Calu3 (cell line): ENCODE measurements at regions of chr7 and their contacts with region 1.

Region 1: GRCh38 chr7:82257118-82257695 is 186.4 kb downstream of the CACNA2D1 start:
- DNase-seq: no peak
- H3K4me3 Mint-ChIP-seq: no peak overlapping the region
- H3K27ac Mint-ChIP-seq: no peak overlapping the region
- H3K4me1 Mint-ChIP-seq: peaks cover 17% of the 10 kb centered on the region
- H3K27me3 Mint-ChIP-seq: no peaks in the 10 kb centered on the region
- CTCF ChIP-seq: no peak

Region 2: DNA sequence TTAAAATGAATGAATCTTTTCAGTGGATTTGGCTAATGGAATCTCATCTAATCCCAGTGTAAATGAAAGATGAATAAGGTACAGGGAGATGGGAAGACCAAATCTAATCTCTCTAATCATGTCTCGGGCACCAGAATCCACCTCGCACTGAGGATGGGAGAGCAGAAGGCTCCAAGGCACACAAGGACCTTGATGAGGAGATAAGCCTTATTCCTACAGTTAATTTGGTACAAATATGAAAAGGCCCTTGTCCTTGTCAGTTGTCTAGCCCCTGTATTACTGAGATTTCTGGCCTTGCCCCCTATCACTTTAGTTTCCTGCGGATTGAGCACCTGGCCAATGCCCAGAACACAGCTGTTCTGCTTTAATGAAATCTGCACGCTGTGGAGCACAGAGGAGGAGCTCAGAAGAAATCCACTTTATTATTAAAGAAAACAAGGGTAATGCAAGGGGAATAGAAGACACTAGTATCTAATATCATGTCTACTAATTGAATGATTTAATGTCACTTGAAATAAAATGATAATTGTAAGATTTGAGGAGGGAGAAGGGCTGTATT is 166.0 kb before region 1 on chr7:
- CTCF ChIA-PET with region 1: no interaction called
- intact Hi-C with region 1: no loop called
- DNase-seq: no peak
- H3K4me3 Mint-ChIP-seq: no peak overlapping the region
- H3K27ac Mint-ChIP-seq: no peak overlapping the region
- H3K4me1 Mint-ChIP-seq: no peaks in the 10 kb centered on the region
- H3K27me3 Mint-ChIP-seq: no peaks in the 10 kb centered on the region
- CTCF ChIP-seq: no peak

Region 3: GRCh38 chr7:82156168-82156567 is 101.0 kb before region 1 on chr7:
- CTCF ChIA-PET with region 1: no interaction called
- intact Hi-C with region 1: no loop called
- DNase-seq: no peak
- H3K4me3 Mint-ChIP-seq: no peak overlapping the region
- H3K27ac Mint-ChIP-seq: no peak overlapping the region
- H3K4me1 Mint-ChIP-seq: no peaks in the 10 kb centered on the region
- H3K27me3 Mint-ChIP-seq: no peaks in the 10 kb centered on the region
- CTCF ChIP-seq: no peak

Region 4: DNA sequence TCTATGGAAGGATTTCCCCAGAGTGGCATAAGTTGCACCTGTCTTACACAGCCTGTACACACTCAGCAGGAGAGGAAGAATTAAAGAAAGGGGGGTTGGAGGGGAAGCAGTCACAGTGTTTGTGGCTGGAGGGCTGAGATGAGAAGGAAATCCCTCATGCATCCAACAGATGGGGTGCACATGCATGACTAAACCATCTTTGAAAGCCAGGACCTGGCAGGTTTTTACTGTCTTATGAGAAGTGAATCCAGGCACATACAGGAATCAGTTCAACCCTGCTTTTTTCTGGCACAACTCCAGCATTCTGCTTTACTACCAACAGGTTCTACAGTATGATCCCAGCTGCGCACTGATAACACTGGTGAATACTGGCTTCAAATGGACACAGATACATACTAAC is 78.7 kb after region 1 on chr7:
- CTCF ChIA-PET with region 1: no interaction called
- intact Hi-C with region 1: loop called (anchors 10 kb)
- DNase-seq: no peak
- H3K4me3 Mint-ChIP-seq: no peak overlapping the region
- H3K27ac Mint-ChIP-seq: no peak overlapping the region
- H3K4me1 Mint-ChIP-seq: no peaks in the 10 kb centered on the region
- H3K27me3 Mint-ChIP-seq: no peaks in the 10 kb centered on the region
- CTCF ChIP-seq: no peak